CD8-positive, alpha-beta T cell (primary cell): ENCODE measurements at regions of chr9 and their contacts with region 1.

Region 1: GRCh38 chr9:30851600-30851999 is 1532.8 kb upstream of the ACO1 start:
- DNase-seq: no peak
- ATAC-seq: no peak
- H3K4me3 ChIP-seq: no peak overlapping the region
- H3K4me3 Mint-ChIP-seq: no peak overlapping the region
- H3K27ac ChIP-seq: no peak overlapping the region
- H3K27ac Mint-ChIP-seq: no peak overlapping the region
- H3K4me1 ChIP-seq: no peaks in the 10 kb centered on the region
- H3K4me1 Mint-ChIP-seq: no peaks in the 10 kb centered on the region
- H3K27me3 ChIP-seq: no peaks in the 10 kb centered on the region
- H3K27me3 Mint-ChIP-seq: no peaks in the 10 kb centered on the region
- CTCF ChIP-seq: no peak

Region 2: DNA sequence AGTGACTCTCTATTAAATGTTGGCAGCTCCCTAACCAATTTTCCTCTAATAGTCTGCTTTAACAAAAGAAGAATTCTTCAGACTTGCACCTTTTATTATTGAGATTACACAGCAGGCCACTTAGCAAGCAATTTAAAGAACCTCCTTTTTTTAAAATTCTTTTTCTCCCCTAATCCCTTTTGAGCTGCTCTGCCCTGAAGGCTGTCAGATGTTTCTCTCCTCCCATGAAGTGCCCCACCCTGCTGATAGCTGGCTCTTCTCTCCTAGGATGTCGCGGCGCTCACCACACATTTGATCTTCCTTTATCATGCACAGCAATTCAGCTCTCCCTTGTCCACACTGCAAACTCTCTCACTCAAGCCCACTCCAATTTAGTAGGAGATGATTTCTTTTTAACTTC is 61.7 kb after region 1 on chr9:
- CTCF ChIA-PET with region 1: no interaction called
- POLR2A ChIA-PET with region 1: no interaction called
- intact Hi-C with region 1: loop called in 1 of 2 experiments (anchors 10 kb)
- DNase-seq: no peak
- ATAC-seq: no peak
- H3K4me3 ChIP-seq: no peak overlapping the region
- H3K4me3 Mint-ChIP-seq: no peak overlapping the region
- H3K27ac ChIP-seq: no peak overlapping the region
- H3K27ac Mint-ChIP-seq: no peak overlapping the region
- H3K4me1 ChIP-seq: no peaks in the 10 kb centered on the region
- H3K4me1 Mint-ChIP-seq: no peaks in the 10 kb centered on the region
- H3K27me3 ChIP-seq: no peaks in the 10 kb centered on the region
- H3K27me3 Mint-ChIP-seq: no peaks in the 10 kb centered on the region
- CTCF ChIP-seq: no peak